ENCODE measurements at regions of chr17 and their contacts with region 1.

Region 1: GRCh38 chr17:29740017-29740416 is 117.3 kb upstream of the CORO6 start:
- DNase-seq: no peak
- ATAC-seq: no peak
- H3K4me3 ChIP-seq: no peak overlapping the region
- H3K27ac ChIP-seq: no peak overlapping the region
- H3K4me1 ChIP-seq: no peaks in the 10 kb centered on the region
- H3K27me3 ChIP-seq: no peaks in the 10 kb centered on the region
- CTCF ChIP-seq: no peak
- EP300 ChIP-seq: no peak
- POLR2A ChIP-seq: no peak
- RAD21 ChIP-seq: no peak

Region 2: GRCh38 chr17:29753845-29754439 is 13.9 kb after region 1 on chr17:
- CTCF ChIA-PET with region 1: interaction called, 7 read pairs
- POLR2A ChIA-PET with region 1: interaction called, 10 read pairs
- RAD21 ChIA-PET with region 1: interaction called, 3 read pairs
- SMC1A ChIA-PET with region 1: interaction called, 7 read pairs
- in situ Hi-C with region 1: no loop called
- intact Hi-C with region 1: no loop called
- DNase-seq: peak; percentile 61
- ATAC-seq: peak; percentile 81
- H3K4me3 ChIP-seq: no peak overlapping the region
- H3K27ac ChIP-seq: peak overlapping the region; percentile 21
- H3K4me1 ChIP-seq: peaks cover 32% of the 10 kb centered on the region
- H3K27me3 ChIP-seq: no peaks in the 10 kb centered on the region
- CTCF ChIP-seq: no peak
- EP300 ChIP-seq: no peak
- POLR2A ChIP-seq: no peak
- RAD21 ChIP-seq: no peak

Measured in GM12878 (cell line).